Endothelial cell of umbilical vein (primary cell): ENCODE measurements at regions of chr21 and their contacts with region 1.

Region 1: DNA sequence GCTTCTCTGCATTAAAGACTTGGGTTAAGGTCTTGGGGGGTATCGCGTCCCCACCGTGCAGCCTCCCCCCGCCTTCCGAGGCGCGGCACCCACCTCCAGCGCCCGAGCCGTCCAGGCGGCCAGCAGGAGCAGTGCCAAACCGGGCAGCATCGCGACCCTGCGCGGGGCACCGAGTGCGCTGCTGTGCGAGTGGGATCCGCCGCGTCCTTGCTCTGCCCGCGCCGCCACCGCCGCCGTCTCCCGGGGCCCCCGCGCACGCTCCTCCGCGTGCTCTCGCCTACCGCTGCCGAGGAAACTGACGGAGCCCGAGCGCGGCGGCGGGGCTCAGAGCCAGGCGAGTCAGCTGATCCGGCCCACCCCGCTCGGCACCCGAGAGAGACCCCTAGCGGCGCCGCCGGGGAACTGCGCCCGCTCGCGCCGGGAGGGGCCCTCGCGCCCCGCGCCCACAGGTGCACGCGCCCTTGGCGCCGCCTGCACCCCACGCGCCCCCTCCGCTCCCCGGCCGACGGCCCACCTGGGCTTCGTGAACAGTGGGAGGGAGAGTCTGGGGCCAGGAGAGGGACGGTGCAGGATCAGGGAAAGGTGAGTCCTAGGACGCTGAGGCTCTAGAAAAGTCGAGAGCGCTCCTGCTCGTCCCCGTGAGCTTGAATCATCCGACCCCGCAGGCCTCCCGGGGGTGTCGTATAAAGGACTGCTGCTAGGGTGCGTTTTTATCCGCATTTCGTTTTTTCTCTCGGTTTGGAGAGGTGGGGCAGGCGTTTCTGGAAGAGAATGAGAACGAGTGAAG is at the start of gene APP:
- DNase-seq: peak; percentile 73
- H3K4me3 ChIP-seq: peak within 1 kb of the TSS; percentile 68 to 94 (median 91)
- H3K27ac ChIP-seq: peak within 1 kb of the TSS; percentile 80
- H3K4me1 ChIP-seq: peaks cover 35% of the 10 kb centered on the region
- H3K27me3 ChIP-seq: no peaks in the 10 kb centered on the region
- CTCF ChIP-seq: peak; percentile 81 to 93
- POLR2A ChIP-seq: peak; percentile 82
- total RNA-seq, gene APP: 811 and 928 TPM in 2 replicates

Region 2: GRCh38 chr21:25607151-25608043 is 563.3 kb before region 1 on chr21 and contains the start of gene MRPL39:
- CTCF ChIA-PET with region 1: no interaction called
- POLR2A ChIA-PET with region 1: no interaction called
- dilution Hi-C with region 1: no loop called
- intact Hi-C with region 1: loop called (anchors 5 kb)
- DNase-seq: peak; percentile 78
- H3K4me3 ChIP-seq: peak within 1 kb of the TSS; percentile 60 to 97 (median 97)
- H3K27ac ChIP-seq: peak within 1 kb of the TSS; percentile 68
- H3K4me1 ChIP-seq: peaks cover 10% of the 10 kb centered on the region
- H3K27me3 ChIP-seq: no peaks in the 10 kb centered on the region
- CTCF ChIP-seq: peak; percentile 55 to 68
- POLR2A ChIP-seq: peak; percentile 73
- total RNA-seq, gene MRPL39: 25.2 and 28.1 TPM in 2 replicates

Region 3: GRCh38 chr21:25895565-25896205 is 275.0 kb before region 1 on chr21:
- CTCF ChIA-PET with region 1: interaction called, 18 read pairs
- POLR2A ChIA-PET with region 1: interaction called, 3 read pairs
- dilution Hi-C with region 1: loop called (anchors 25 kb)
- intact Hi-C with region 1: loop called (anchors 1 kb)
- DNase-seq: peak; percentile 70
- H3K4me3 ChIP-seq: no peak overlapping the region
- H3K27ac ChIP-seq: peak overlapping the region; percentile 59
- H3K4me1 ChIP-seq: peaks cover 37% of the 10 kb centered on the region
- H3K27me3 ChIP-seq: no peaks in the 10 kb centered on the region
- CTCF ChIP-seq: peak; percentile 39 to 41
- POLR2A ChIP-seq: no peak

Region 4: DNA sequence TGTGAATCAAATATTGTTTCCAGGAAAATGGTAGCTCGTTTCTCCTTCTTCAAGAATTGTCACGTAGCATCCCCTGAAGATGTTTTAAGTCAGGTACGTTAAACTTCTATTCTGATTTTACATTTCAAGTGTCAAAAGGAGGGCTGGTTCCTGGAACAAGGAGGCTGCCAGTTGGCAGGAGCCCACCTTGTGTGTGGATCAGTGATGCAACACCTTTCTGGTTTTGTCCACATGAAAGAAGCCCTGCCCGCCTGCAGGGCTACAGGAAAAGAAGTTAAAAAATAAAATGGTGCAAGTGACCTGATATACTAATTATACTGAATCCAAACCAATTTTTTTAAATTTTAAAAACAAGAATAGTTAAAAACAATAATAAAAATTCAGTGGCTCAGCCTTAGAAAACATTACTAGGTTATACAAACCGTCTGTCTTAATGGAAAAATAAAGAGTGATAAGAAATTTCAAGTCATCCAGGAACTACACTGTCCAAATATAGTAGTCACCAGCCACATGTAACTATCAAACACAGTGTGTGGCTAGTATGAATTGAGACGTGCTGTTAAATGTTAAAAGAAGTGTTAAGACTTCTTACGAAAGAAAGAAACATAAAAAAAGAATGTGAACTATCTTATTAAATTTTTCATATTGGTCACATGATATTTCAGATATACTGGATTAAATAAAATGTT is 123.2 kb before region 1 on chr21:
- CTCF ChIA-PET with region 1: interaction called, 4 read pairs
- POLR2A ChIA-PET with region 1: no interaction called
- dilution Hi-C with region 1: no loop called
- intact Hi-C with region 1: loop called (anchors 5 kb)
- DNase-seq: no peak
- H3K4me3 ChIP-seq: no peak overlapping the region
- H3K27ac ChIP-seq: no peak overlapping the region
- H3K4me1 ChIP-seq: peaks cover 7% of the 10 kb centered on the region
- H3K27me3 ChIP-seq: no peaks in the 10 kb centered on the region
- CTCF ChIP-seq: no peak
- POLR2A ChIP-seq: no peak

Region 5: DNA sequence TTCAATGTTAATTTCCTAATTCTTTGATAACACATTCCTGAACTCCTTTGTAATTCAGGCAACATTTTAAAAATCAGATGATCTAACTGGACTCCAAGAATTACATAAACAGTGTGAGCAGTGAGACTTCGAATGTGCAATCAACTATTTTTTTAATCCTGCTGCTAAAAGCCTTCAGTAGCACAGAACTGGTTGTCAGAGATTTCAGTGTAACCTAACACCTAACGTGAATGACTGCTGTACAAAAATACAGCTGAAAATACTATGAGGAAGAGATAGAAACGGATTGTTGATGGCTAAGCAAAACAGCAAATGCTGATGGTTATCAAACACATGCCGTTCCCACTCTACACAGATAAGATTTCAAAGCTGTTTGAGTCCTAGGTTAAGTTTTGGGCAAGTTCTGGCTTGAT is 46.2 kb before region 1 on chr21:
- CTCF ChIA-PET with region 1: interaction called, 7 read pairs
- POLR2A ChIA-PET with region 1: interaction called, 3 read pairs
- dilution Hi-C with region 1: no loop called
- intact Hi-C with region 1: loop called (anchors 1 kb)
- DNase-seq: peak; percentile 84
- H3K4me3 ChIP-seq: no peak overlapping the region
- H3K27ac ChIP-seq: peak overlapping the region; percentile 60
- H3K4me1 ChIP-seq: peaks cover 58% of the 10 kb centered on the region
- H3K27me3 ChIP-seq: no peaks in the 10 kb centered on the region
- CTCF ChIP-seq: no peak
- POLR2A ChIP-seq: no peak

Region 6: DNA sequence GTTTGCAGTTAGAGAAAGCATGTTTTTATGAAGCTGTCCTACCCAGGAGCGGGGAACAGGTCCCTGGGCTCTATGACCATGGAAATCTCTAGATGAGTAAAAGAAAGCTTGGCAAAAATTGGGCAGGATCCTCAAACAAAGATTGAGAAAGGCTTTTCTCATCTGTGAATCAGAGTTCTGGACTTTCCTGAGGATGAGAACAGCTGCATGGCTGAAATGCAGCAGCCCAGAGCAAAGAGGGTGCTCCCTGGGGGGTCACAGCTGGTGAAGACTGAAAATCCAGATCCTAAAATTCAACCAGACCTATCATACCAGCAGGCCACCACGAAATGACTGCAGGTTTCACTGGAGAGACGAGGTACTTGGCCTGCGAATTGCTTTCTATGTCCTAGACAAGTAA is 65.6 kb after region 1 on chr21:
- CTCF ChIA-PET with region 1: no interaction called
- POLR2A ChIA-PET with region 1: no interaction called
- dilution Hi-C with region 1: no loop called
- intact Hi-C with region 1: no loop called
- DNase-seq: no peak
- H3K4me3 ChIP-seq: no peak overlapping the region
- H3K27ac ChIP-seq: no peak overlapping the region
- H3K4me1 ChIP-seq: no peaks in the 10 kb centered on the region
- H3K27me3 ChIP-seq: peaks cover 7 to 13% of the 10 kb centered on the region in 2 experiments
- CTCF ChIP-seq: no peak
- POLR2A ChIP-seq: no peak

Region 7: DNA sequence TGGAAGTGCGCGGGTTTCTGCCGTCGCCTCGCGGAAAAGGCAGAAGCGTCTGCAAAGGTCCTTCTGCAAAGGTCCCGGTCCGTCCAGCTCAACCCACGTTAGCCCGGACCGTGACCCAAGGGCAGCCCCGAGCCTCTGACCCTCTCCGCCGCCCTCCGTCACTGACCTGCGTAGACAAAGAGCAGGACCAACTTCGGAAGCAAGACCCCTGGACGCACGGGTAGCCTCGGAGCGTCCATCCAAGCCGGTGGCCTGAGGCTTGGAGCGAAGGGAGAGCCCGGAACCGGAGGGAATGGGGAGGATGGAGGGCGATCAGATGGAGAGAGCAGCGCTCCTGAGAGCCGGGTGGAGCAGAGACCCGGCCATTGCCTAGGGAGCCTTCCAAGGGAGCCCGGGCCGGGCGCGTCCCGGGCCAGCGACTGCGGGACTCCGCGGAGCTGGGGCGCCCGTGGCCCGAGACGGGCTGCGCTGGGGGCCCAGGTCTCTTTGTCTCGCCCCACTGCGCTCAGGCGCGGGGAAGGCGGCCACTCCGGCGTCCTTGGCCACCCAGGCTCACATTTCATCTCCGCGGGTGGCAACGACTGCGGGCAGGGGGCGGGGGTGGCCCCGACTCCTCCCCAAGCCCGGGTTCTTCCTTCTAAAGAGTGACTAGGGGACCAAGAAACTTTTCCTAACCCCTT is 402.2 kb after region 1 on chr21 and contains the start of gene CYYR1:
- CTCF ChIA-PET with region 1: no interaction called
- POLR2A ChIA-PET with region 1: no interaction called
- dilution Hi-C with region 1: no loop called
- intact Hi-C with region 1: loop called (anchors 2 kb)
- DNase-seq: peak; percentile 62
- H3K4me3 ChIP-seq: peak within 1 kb of the TSS; percentile 72 to 83 (median 74)
- H3K27ac ChIP-seq: peak within 1 kb of the TSS; percentile 42
- H3K4me1 ChIP-seq: peaks cover 29% of the 10 kb centered on the region
- H3K27me3 ChIP-seq: no peaks in the 10 kb centered on the region
- CTCF ChIP-seq: no peak
- POLR2A ChIP-seq: no peak
- total RNA-seq, gene CYYR1: 23.8 and 25.7 TPM in 2 replicates